Right lobe of liver (tissue), 6 donors: ENCODE measurements at regions of chr1 and their contacts with region 1.

Region 1: GRCh38 chr1:26035959-26036755 is 9.8 kb downstream of the SLC30A2 start:
- DNase-seq: peak; percentile 84 to 85 (median 85)
- ATAC-seq: peak; percentile 91 to 94 (median 93)
- H3K4me3 ChIP-seq: peak overlapping the region; percentile 75 to 90 (median 82)
- H3K27ac ChIP-seq: peak overlapping the region; percentile 43 to 59 (median 56)
- H3K4me1 ChIP-seq: no peaks in the 10 kb centered on the region
- H3K27me3 ChIP-seq: no peaks in the 10 kb centered on the region
- CTCF ChIP-seq: peak; percentile 99
- POLR2A ChIP-seq: no peak

Region 2: DNA sequence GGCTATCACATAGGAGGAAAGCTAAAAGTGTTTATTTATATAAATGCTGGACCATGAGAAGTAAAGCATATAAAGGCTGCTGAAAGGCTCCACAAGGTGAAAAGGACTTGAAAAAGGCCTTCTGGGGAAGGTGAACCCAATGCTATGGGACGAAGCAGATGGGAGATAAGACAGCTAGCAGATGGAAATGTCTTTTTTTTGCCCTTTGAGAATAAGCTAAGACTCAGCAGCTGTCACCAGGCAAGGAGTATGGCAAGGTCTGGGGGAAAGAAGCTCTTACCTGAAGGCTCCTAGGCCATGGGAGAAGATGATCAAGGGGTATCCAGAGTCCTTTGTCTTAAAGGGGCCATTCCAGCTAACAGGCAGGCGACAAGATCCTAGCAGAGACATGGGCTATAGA is 48.2 kb before region 1 on chr1:
- intact Hi-C with region 1: no loop called
- DNase-seq: no peak
- ATAC-seq: no peak
- H3K4me3 ChIP-seq: no peak overlapping the region
- H3K27ac ChIP-seq: no peak overlapping the region
- H3K4me1 ChIP-seq: no peaks in the 10 kb centered on the region
- H3K27me3 ChIP-seq: no peaks in the 10 kb centered on the region
- CTCF ChIP-seq: no peak
- POLR2A ChIP-seq: no peak

Region 3: GRCh38 chr1:26156704-26157038 is 120.5 kb after region 1 on chr1:
- intact Hi-C with region 1: loop called in 1 of 2 experiments (anchors 10 kb)
- DNase-seq: peak in 1 of 3 donors; percentile 55
- ATAC-seq: peak; percentile 14 to 30 (median 20)
- H3K4me3 ChIP-seq: no peak overlapping the region
- H3K27ac ChIP-seq: no peak overlapping the region
- H3K4me1 ChIP-seq: peaks cover 0 to 6% (median 0%) of the 10 kb centered on the region in 4 donors
- H3K27me3 ChIP-seq: no peaks in the 10 kb centered on the region
- CTCF ChIP-seq: no peak
- POLR2A ChIP-seq: no peak

Region 4: DNA sequence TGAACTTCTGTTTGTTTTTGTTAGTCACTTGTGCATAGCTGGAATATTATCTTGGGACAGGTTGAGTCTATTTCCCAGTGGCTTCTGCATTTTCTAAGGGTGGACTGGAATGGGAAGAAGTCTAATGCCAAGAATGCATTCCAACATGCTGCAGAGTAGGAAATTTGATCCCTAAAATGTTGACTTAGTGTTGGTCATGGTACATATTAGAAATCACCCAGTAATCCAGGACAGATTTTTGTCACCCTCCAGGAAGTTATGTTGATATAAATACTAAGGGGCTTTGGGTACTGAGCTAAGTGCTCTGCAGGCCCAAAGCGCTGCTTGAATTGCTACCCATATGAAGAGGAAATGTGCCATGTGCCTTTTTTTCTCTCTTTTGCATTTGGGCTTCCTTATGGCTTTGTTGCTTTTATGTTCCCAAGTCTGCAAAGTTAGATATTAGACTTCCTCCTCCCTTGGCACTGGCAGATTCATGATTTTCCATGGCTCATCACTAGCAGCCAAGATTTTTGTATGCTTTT is 669.7 kb after region 1 on chr1:
- intact Hi-C with region 1: no loop called
- DNase-seq: no peak
- ATAC-seq: peak; percentile 40 to 70 (median 53)
- H3K4me3 ChIP-seq: peak overlapping the region in 2 of 3 donors; percentile 16 to 21
- H3K27ac ChIP-seq: peak overlapping the region; percentile 62 to 84 (median 82)
- H3K4me1 ChIP-seq: peaks cover 0 to 64% (median 29%) of the 10 kb centered on the region in 4 donors
- H3K27me3 ChIP-seq: no peaks in the 10 kb centered on the region
- CTCF ChIP-seq: no peak
- POLR2A ChIP-seq: no peak